ENCODE measurements at regions of chr1 and their contacts with region 1.

Region 1: DNA sequence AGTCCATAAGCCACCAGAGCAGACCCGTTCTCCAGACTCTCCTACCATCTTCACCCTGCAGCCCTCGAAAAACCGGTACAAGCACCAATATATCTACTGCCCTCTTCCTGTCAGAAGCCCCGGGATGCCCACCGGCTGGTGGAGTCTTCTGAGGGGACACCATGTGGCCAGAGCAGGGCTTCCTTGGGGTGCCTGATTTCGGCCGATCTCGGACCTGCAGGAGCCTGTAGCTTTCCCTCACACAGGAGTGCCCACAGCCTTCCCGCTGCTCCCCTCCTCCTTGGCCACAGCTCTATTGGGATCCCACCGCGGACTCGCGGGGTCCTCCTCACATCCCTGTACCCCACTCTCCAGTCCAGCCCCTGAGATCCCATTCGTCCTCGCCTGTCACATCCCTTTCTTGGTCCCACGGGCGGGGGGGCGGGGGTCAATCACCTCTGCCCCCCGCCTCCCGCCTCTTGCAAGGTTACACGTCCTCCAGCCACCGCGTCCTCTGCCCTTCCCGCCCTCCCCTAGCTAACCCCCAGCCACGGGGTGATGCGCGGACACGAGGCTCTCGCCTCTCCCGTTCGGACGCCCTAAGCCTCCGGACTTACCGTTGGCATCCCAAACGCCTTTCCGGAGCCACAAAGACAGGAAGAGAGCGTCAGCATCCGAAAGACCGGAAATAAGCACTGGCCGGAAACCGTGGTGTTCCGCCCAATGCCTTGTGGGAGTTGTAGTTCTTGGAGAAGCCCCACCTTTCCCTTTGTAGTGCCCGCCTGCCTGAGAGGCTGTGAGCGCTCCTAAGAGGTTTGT is at the start of gene SSR2:
- DNase-seq: peak; percentile 85 to 92 (median 87)
- H3K4me3 ChIP-seq: peak within 1 kb of the TSS; percentile 78 to 81
- H3K4me3 Mint-ChIP-seq: peak within 1 kb of the TSS; percentile 96 to 99 (median 99)
- H3K27ac ChIP-seq: peak within 1 kb of the TSS; percentile 77
- H3K27ac Mint-ChIP-seq: peak within 1 kb of the TSS; percentile 82 to 99 (median 98)
- H3K4me1 ChIP-seq: peaks cover 17% of the 10 kb centered on the region
- H3K4me1 Mint-ChIP-seq: peaks cover 20 to 44% (median 30%) of the 10 kb centered on the region in 4 donors
- H3K27me3 ChIP-seq: no peaks in the 10 kb centered on the region
- H3K27me3 Mint-ChIP-seq: peaks cover 0 to 2% of the 10 kb centered on the region in 2 donors
- total RNA-seq, gene SSR2: 252 to 276 TPM

Region 2: GRCh38 chr1:156004843-156005593 is 15.5 kb before region 1 on chr1:
- CTCF ChIA-PET with region 1: interaction called, 3 read pairs
- POLR2A ChIA-PET with region 1: interaction called, 5 read pairs
- intact Hi-C with region 1: loop called (anchors 2 kb)
- DNase-seq: peak; percentile 39 to 55 (median 48)
- H3K4me3 ChIP-seq: peak overlapping the region in 1 of 2 donors; percentile 36
- H3K4me3 Mint-ChIP-seq: peak overlapping the region; percentile 38 to 79 (median 61)
- H3K27ac ChIP-seq: peak overlapping the region; percentile 18
- H3K27ac Mint-ChIP-seq: peak overlapping the region; percentile 78 to 94 (median 92)
- H3K4me1 ChIP-seq: peaks cover 22% of the 10 kb centered on the region
- H3K4me1 Mint-ChIP-seq: peaks cover 22 to 45% (median 30%) of the 10 kb centered on the region in 4 donors
- H3K27me3 ChIP-seq: no peaks in the 10 kb centered on the region
- H3K27me3 Mint-ChIP-seq: no peaks in the 10 kb centered on the region

Measured in CD4-positive, alpha-beta memory T cell (primary cell).